ENCODE measurements at regions of chr3 and their contacts with region 1.

Region 1: DNA sequence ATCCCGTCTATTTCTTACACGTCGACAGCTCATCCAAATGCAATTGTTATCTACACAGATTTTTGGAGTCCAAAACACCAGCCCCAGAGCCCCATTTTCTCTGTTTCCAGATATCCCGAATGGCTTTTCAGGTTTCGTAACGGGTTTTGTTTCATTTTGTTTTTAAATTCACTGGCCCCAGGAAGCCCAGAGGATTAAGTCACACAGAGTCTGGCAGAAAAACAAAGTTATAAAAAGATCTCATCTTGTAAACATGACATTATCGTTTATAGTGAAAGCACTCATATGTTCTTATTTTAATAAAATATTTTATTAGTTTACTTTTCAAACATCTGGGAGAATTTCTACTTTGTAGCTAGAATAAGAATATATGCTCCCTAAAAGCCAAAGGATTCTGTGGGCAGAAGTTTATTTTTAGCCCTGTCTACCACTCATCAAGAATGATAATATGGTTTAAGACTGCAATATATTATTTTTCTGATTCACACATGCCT is 149.3 kb upstream of the SLC2A2 start:
- DNase-seq: no peak
- ATAC-seq: peak; percentile 59 to 69
- H3K4me3 ChIP-seq: peak overlapping the region; percentile 47 to 52 (median 51)
- H3K27ac ChIP-seq: peak overlapping the region; percentile 82 to 90 (median 82)
- H3K4me1 ChIP-seq: peaks cover 20 to 25% of the 10 kb centered on the region in 2 donors
- H3K27me3 ChIP-seq: no peaks in the 10 kb centered on the region
- CTCF ChIP-seq: no peak
- POLR2A ChIP-seq: no peak

Region 2: DNA sequence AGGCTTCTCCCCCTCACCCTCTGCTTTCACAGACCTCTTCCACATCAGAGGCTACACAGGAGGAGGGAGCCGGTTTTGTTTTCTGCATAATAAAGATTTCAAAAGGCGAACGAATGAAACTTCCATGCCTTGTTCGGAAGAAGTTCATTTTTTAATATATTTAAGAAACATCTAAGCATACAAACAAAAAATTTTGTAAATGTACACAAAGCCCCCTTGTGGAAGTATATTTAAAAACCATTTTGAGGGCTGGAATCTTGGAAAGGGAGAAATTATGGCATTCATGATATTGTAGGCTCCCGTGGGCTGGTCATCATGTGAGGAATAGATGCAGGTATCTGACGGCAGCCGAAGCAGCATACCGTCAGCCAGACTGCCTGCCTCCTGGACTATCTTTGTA is 1602.7 kb before region 1 on chr3:
- in situ Hi-C with region 1: no loop called
- intact Hi-C with region 1: no loop called
- DNase-seq: no peak
- ATAC-seq: no peak
- H3K4me3 ChIP-seq: no peak overlapping the region
- H3K27ac ChIP-seq: no peak overlapping the region
- H3K4me1 ChIP-seq: no peaks in the 10 kb centered on the region
- H3K27me3 ChIP-seq: no peaks in the 10 kb centered on the region
- CTCF ChIP-seq: no peak
- POLR2A ChIP-seq: no peak

Region 3: DNA sequence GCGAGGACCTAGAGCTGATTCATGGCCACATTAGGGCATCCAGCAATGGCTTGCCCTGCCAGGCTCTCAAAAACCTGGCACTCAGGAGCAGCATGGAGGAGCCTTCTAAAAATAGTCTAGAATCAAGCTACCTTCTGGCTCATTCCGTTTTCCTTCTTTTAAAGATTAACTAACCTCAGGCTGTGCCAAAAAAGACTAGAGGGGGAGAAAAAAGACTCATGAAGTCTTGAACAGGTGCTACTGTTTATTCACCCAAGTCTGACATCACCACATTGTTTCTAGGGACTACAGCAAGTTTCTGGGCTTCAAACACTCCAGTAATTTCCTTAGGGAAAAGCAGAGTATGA is 158.7 kb after region 1 on chr3:
- in situ Hi-C with region 1: no loop called
- intact Hi-C with region 1: loop called (anchors 5 kb)
- DNase-seq: peak; percentile 65 to 86
- ATAC-seq: peak; percentile 91 to 95
- H3K4me3 ChIP-seq: no peak overlapping the region
- H3K27ac ChIP-seq: peak overlapping the region; percentile 81 to 91 (median 86)
- H3K4me1 ChIP-seq: peaks cover 50 to 62% of the 10 kb centered on the region in 2 donors
- H3K27me3 ChIP-seq: no peaks in the 10 kb centered on the region
- CTCF ChIP-seq: no peak
- POLR2A ChIP-seq: no peak

Measured in gastrocnemius medialis (tissue), 4 donors.